Tibial artery (tissue), 4 donors: ENCODE measurements at regions of chr7 and their contacts with region 1.

Region 1: GRCh38 chr7:78510580-78511188 is 712.1 kb downstream of the PHTF2 start:
- DNase-seq: no peak
- H3K4me3 ChIP-seq: no peak overlapping the region
- H3K27ac ChIP-seq: no peak overlapping the region
- H3K4me1 ChIP-seq: peaks cover 0 to 4% (median 0%) of the 10 kb centered on the region in 4 donors
- H3K27me3 ChIP-seq: no peaks in the 10 kb centered on the region
- CTCF ChIP-seq: peak; percentile 58 to 59

Region 2: DNA sequence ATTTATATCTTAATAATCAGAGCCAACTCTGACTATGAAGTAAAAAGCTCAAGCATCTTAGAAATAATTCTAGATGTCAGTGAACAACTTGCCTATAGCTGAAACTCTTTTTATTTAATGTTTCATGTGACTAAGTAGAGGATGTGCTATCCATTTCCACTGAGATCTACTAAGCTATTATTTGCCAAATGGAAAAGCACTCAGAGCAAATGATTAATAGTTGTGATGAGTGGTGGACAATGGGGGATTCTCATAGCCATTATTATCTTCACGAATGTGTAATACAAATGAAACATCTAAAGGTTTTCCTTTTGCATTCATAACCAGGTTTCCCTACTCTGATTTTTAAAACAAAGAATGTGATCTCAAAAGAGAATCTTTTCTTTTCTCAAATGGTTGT is 1497.4 kb after region 1 on chr7:
- intact Hi-C with region 1: loop called (anchors 5 kb)
- DNase-seq: no peak
- H3K4me3 ChIP-seq: no peak overlapping the region
- H3K27ac ChIP-seq: no peak overlapping the region
- H3K4me1 ChIP-seq: no peaks in the 10 kb centered on the region
- H3K27me3 ChIP-seq: no peaks in the 10 kb centered on the region
- CTCF ChIP-seq: no peak